WTC11 (cell line): ENCODE measurements at regions of chr5 and their contacts with region 1.

Region 1: DNA sequence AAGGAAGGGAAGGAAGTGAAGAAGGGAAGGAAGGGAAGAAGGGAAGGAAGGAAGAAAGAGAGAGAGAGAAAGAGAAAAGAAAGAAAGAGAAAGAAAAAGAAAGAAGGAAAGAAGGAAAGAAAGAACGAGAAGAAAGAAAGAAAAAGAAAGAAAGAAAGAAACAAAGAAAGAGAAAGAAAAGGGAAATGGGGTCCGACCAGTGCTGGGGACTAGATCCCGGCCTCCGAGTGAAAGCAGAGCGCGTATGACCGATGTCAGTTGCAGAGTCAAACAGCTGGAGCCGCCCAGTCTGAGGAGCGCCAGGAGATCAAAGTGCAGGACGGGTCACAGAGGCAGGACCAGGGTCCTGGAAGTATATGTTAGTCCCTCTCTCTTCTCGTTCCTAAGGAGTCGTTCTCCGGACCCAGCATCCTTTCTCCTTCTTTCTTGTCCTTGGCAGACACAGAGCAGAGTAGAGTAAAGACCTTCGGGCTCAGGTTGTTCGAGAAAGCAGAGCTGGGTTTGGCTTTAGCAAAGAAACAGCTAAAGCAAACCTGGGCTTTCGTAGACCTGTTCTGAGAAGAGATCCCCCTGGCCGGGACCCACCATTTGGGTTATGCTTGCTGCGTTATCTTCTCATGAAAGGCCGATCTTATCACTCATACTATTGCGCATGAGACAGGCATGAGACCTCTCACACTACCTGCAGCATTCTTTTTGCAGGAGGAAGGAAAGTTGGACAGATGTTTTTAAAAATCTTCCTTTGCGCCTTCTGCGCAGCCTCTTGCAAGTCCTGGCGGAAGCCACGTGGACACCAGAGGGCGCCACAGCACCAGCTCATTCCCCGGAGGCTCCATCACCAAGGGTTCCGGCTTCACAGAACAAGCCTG is 305.2 kb upstream of the MSX2 start:
- DNase-seq: peak; percentile 96
- ATAC-seq: peak; percentile 93
- H3K4me3 Mint-ChIP-seq: peak overlapping the region; percentile 78
- H3K27ac Mint-ChIP-seq: no peak overlapping the region
- H3K4me1 Mint-ChIP-seq: peaks cover 7% of the 10 kb centered on the region
- H3K27me3 Mint-ChIP-seq: peaks cover 24% of the 10 kb centered on the region
- CTCF ChIP-seq: peak; percentile 88

Region 2: GRCh38 chr5:173972925-173973615 is 446.1 kb before region 1 on chr5:
- CTCF ChIA-PET with region 1: no interaction called
- POLR2A ChIA-PET with region 1: no interaction called
- DNase-seq: peak; percentile 89
- ATAC-seq: peak; percentile 69
- H3K4me3 Mint-ChIP-seq: peak overlapping the region; percentile 73
- H3K27ac Mint-ChIP-seq: peak overlapping the region; percentile 94
- H3K4me1 Mint-ChIP-seq: peaks cover 52% of the 10 kb centered on the region
- H3K27me3 Mint-ChIP-seq: peaks cover 7% of the 10 kb centered on the region; the same call in 1 of the 2 replicates
- CTCF ChIP-seq: peak; percentile 78

Region 3: DNA sequence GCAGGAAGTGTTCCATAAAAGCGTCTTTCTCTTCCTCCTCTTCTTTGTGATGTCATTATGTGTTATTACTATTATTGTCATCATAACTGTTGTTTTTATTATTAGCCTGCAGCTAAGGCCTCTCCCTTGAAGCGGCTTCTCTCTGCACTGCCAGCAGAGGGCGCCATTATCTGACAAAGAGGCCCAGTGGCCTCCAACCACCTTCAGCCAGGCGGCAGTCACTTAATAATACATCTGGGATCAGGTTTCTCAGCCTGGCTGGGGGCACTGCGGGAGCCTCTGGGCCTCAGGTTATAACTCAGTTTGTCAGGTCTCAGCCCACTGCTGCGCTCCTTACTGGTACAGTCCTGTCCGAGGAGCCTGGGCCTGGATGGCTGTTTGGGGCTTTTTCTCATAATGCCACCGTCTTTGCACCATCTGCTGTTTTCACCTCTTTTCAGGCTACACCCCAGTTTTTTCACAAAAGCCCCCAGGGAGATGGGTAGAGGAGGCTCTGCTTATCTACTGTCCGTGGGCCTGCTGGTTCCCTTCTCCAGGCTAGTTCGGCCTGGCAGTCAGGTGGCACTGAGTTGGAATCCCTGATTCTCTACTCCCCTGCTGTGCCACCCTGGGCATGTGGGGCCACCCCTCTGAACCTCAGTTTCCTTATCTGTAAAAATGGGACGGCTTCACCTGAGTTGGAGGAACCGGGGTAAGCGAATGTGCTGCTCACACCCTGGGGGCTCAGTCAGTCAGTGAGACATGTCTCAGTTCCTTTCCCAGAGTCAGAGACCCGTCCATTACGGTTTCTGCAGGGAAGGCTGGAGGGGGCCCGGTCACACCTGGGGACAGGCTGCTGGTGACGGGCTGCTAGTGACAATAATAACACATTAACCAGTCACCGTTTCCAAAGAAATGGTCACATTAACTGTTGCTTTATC is 91.6 kb before region 1 on chr5:
- CTCF ChIA-PET with region 1: interaction called, 15 read pairs
- POLR2A ChIA-PET with region 1: no interaction called
- DNase-seq: peak; percentile 92
- ATAC-seq: peak; percentile 92
- H3K4me3 Mint-ChIP-seq: no peak overlapping the region
- H3K27ac Mint-ChIP-seq: no peak overlapping the region; the same call in 1 of the 2 replicates
- H3K4me1 Mint-ChIP-seq: peaks cover 32% of the 10 kb centered on the region
- H3K27me3 Mint-ChIP-seq: no peaks in the 10 kb centered on the region; the same call in 1 of the 2 replicates
- CTCF ChIP-seq: peak; percentile 79

Region 4: DNA sequence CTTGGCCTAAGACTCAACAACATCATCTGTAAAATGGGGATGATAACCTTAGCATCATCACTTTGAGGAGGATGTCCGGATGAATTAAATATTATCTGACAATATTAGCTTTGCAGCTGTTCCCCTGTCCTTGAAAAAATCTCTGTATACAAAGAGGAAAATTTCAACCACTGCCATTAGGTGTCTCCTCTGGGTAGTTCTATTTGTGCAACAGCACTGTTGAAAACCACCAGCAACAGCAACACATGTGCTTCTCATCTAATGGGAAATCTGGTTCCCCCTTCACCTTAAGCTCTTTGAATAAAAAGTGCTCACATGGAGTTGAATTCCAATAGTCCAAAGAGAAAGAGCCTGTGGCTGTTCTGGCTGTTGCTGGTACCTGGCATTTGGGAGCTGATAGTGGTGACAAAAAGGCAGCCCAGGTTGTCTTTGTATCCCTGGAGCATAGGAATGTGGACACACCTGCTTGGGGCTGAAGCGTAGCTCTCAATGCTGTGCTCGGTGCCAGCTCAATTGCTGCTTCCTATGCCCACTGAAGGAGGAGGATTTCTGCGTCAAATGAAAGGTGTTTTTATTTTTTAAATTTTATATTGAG is 16.8 kb before region 1 on chr5:
- CTCF ChIA-PET with region 1: interaction called, 18 read pairs
- POLR2A ChIA-PET with region 1: no interaction called
- DNase-seq: no peak
- ATAC-seq: peak; percentile 57
- H3K4me3 Mint-ChIP-seq: no peak overlapping the region
- H3K27ac Mint-ChIP-seq: no peak overlapping the region
- H3K4me1 Mint-ChIP-seq: peaks cover 13% of the 10 kb centered on the region; the same call in 1 of the 2 replicates
- H3K27me3 Mint-ChIP-seq: no peaks in the 10 kb centered on the region
- CTCF ChIP-seq: no peak

Region 5: DNA sequence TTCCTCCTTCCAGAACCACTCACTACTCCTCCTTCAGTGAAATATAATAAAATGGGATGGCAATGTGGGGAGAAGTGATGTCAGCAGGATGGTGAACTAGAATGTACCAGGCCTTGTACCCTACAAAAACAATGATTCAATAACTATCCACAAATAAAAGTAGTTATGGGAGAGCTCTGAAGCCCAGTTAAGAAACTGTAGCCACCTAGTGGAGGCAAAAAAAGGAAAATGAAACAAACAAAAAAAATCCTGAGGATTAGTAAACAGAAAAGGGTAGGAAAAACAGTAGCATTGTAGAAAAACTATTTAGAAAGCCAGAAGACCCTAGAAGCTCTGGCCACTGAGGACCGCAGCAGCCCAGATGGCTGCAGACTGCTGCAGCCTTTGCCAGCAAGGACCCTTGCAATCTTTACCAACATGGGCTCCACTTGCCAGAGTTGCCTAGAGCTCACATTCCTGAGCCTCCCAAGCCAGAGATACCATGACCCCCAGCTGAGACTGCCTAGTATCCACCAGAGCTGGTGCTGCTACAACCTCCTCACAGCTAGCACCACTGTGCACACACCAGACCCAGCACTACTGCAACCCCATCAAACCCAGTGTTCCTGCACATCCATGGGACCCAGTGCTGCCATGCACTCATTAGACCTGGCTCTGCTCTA is 45.5 kb after region 1 on chr5:
- CTCF ChIA-PET with region 1: interaction called, 34 read pairs
- POLR2A ChIA-PET with region 1: no interaction called
- DNase-seq: no peak
- ATAC-seq: peak; percentile 66
- H3K4me3 Mint-ChIP-seq: no peak overlapping the region
- H3K27ac Mint-ChIP-seq: no peak overlapping the region
- H3K4me1 Mint-ChIP-seq: peaks cover 18% of the 10 kb centered on the region
- H3K27me3 Mint-ChIP-seq: peaks cover 3% of the 10 kb centered on the region; the same call in 1 of the 2 replicates
- CTCF ChIP-seq: no peak

Region 6: DNA sequence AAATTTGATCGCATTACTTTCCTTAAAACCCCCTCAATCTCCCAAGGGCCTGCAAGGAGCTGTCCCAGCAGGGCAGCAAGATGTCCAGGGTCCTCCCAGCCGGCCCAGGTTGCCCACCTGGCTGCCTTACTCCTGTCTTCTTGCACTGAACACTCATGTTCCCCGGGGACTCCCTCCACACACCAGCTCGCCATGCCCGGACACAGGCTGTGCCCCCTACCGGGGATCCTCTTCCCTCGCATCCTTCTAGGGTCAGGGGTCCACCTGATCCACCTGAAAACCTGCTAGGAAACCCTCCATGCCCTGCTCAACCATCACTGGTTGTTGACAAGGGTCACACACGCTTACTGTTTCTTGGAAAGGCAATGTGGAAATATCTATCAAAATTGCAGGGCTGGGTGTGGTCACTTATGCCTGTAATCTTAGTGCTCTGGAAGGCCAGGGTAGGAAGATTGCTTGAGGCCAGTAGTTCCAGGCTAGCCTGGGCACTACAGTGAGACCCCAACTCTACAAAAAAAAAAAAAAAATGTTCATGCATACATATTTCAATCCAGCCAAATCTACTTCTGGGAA is 133.4 kb after region 1 on chr5:
- CTCF ChIA-PET with region 1: interaction called, 13 read pairs
- POLR2A ChIA-PET with region 1: no interaction called
- DNase-seq: peak; percentile 25
- ATAC-seq: no peak
- H3K4me3 Mint-ChIP-seq: no peak overlapping the region
- H3K27ac Mint-ChIP-seq: no peak overlapping the region
- H3K4me1 Mint-ChIP-seq: no peaks in the 10 kb centered on the region
- H3K27me3 Mint-ChIP-seq: no peaks in the 10 kb centered on the region; the same call in 1 of the 2 replicates
- CTCF ChIP-seq: no peak

Region 7: GRCh38 chr5:174724491-174725260 is 305.5 kb after region 1 on chr5 and contains the start of gene MSX2:
- CTCF ChIA-PET with region 1: interaction called, 26 read pairs
- POLR2A ChIA-PET with region 1: no interaction called
- DNase-seq: peak; percentile 91
- ATAC-seq: peak; percentile 75
- H3K4me3 Mint-ChIP-seq: peak within 1 kb of the TSS; percentile 85
- H3K27ac Mint-ChIP-seq: no peak within 1 kb of the TSS
- H3K4me1 Mint-ChIP-seq: peaks cover 72% of the 10 kb centered on the region
- H3K27me3 Mint-ChIP-seq: peaks cover 99% of the 10 kb centered on the region
- CTCF ChIP-seq: no peak
- total RNA-seq, gene MSX2: 0.73 to 0.94 TPM (median 0.83 TPM) in 3 replicates

Region 8: DNA sequence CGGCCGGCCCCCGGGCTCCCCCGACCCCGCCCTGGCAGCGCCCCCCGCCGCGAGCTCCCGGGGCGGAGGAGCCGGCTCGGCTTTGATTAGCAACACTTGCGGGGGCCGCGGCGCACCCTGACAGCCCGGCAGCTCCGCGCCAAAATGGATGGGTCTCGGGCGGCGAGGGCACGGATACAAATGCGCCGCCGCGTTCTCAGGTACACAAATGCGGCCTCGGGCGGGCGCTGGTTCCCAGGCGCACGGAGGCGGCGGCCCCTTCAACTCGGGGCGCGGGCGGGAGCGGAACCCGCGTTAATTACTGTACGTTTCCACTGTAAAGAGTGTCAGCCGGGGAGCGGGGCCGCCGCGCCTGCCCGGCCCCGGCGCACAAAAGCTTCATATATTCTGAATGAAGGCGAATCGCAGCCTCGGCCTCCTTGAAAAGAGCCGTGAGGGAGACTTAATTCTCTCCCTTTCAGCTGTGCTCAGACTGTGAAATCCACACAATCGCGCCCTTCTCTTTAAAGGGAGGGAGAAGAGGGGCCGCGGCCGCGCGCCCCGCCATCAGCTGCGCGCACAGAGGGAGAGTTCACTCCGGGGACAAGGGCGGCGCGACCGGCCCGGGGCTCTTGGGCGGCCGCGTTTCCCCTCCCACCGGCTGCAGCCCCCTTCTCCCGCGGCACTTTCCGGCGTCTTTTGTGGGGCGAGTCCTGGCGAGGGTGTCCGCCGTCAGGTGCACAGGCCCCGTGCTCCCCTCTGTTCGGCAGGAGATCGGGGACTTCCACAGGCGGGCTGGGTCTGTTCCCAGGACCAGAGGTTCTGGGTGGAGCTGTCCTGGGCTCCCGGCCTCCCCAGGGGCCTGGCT is 332.2 kb after region 1 on chr5:
- CTCF ChIA-PET with region 1: interaction called, 30 read pairs
- POLR2A ChIA-PET with region 1: no interaction called
- DNase-seq: peak; percentile 59
- ATAC-seq: peak; percentile 71
- H3K4me3 Mint-ChIP-seq: peak overlapping the region; percentile 76
- H3K27ac Mint-ChIP-seq: no peak overlapping the region
- H3K4me1 Mint-ChIP-seq: peaks cover 3% of the 10 kb centered on the region
- H3K27me3 Mint-ChIP-seq: peaks cover 73% of the 10 kb centered on the region
- CTCF ChIP-seq: no peak